Calu3 (cell line): ENCODE measurements at regions of chr6 and their contacts with region 1.

Region 1: GRCh38 chr6:25263657-25264056 is 15.5 kb upstream of the CARMIL1 start:
- DNase-seq: no peak
- H3K4me3 Mint-ChIP-seq: no peak overlapping the region
- H3K27ac Mint-ChIP-seq: no peak overlapping the region
- H3K4me1 Mint-ChIP-seq: peaks cover 10% of the 10 kb centered on the region
- H3K27me3 Mint-ChIP-seq: no peaks in the 10 kb centered on the region
- CTCF ChIP-seq: no peak

Region 2: DNA sequence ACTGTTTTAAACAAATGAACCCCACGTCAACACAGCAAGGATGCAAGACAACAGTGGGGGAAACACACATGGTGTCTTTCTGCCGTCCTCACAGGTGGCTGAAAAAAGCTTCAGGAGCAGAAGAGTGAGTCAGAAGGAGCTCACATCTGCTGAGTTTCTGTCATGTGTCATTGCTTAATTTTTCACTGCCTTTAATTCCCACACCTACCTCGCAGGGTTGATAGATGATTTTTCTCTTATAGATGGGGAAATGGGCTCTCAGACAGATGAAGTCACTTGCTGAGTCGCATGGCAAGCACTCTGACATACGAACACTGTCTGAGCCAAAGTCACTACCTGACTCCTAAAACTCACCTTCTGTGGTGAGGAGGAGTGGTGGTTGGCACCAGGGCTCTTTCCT is 12.8 kb before region 1 on chr6:
- CTCF ChIA-PET with region 1: interaction called, 21 read pairs
- intact Hi-C with region 1: no loop called
- DNase-seq: no peak
- H3K4me3 Mint-ChIP-seq: no peak overlapping the region
- H3K27ac Mint-ChIP-seq: no peak overlapping the region
- H3K4me1 Mint-ChIP-seq: no peaks in the 10 kb centered on the region
- H3K27me3 Mint-ChIP-seq: no peaks in the 10 kb centered on the region
- CTCF ChIP-seq: no peak

Region 3: GRCh38 chr6:25490018-25490801 is 226.6 kb after region 1 on chr6:
- CTCF ChIA-PET with region 1: interaction called, 84 read pairs
- intact Hi-C with region 1: loop called (anchors 1 kb)
- DNase-seq: peak; percentile 86
- H3K4me3 Mint-ChIP-seq: no peak overlapping the region
- H3K27ac Mint-ChIP-seq: peak overlapping the region; percentile 2
- H3K4me1 Mint-ChIP-seq: peaks cover 13% of the 10 kb centered on the region
- H3K27me3 Mint-ChIP-seq: no peaks in the 10 kb centered on the region
- CTCF ChIP-seq: peak; percentile 81

Region 4: DNA sequence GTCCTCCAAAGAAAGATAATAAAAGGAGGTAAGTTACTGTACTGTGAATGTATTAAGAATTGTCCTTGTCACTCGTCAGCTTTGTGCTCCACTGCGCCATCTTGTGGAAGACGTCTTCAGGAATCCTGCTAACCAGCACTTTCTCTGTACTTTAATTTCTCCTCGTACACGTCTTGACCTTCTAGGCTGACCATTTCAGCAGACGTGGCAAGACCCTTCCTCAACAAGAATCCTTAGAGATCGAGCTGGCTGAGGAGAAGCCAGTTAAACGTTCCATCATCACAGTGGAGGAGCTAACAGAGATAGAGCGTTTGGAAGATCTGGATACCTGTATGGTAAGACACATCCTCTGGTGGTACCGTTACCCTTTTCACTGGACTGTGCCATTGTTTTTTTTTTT is 292.9 kb after region 1 on chr6:
- CTCF ChIA-PET with region 1: interaction called, 18 read pairs
- intact Hi-C with region 1: loop called (anchors 1 kb)
- DNase-seq: peak; percentile 88
- H3K4me3 Mint-ChIP-seq: no peak overlapping the region
- H3K27ac Mint-ChIP-seq: peak overlapping the region; percentile 2
- H3K4me1 Mint-ChIP-seq: peaks cover 16% of the 10 kb centered on the region
- H3K27me3 Mint-ChIP-seq: no peaks in the 10 kb centered on the region
- CTCF ChIP-seq: peak; percentile 94

Region 5: GRCh38 chr6:25601800-25602673 is 338.4 kb after region 1 on chr6:
- CTCF ChIA-PET with region 1: interaction called, 3 read pairs
- intact Hi-C with region 1: loop called (anchors 1 kb)
- DNase-seq: no peak
- H3K4me3 Mint-ChIP-seq: no peak overlapping the region
- H3K27ac Mint-ChIP-seq: peak overlapping the region; percentile 13
- H3K4me1 Mint-ChIP-seq: peaks cover 17% of the 10 kb centered on the region
- H3K27me3 Mint-ChIP-seq: no peaks in the 10 kb centered on the region
- CTCF ChIP-seq: peak; percentile 47

Region 6: DNA sequence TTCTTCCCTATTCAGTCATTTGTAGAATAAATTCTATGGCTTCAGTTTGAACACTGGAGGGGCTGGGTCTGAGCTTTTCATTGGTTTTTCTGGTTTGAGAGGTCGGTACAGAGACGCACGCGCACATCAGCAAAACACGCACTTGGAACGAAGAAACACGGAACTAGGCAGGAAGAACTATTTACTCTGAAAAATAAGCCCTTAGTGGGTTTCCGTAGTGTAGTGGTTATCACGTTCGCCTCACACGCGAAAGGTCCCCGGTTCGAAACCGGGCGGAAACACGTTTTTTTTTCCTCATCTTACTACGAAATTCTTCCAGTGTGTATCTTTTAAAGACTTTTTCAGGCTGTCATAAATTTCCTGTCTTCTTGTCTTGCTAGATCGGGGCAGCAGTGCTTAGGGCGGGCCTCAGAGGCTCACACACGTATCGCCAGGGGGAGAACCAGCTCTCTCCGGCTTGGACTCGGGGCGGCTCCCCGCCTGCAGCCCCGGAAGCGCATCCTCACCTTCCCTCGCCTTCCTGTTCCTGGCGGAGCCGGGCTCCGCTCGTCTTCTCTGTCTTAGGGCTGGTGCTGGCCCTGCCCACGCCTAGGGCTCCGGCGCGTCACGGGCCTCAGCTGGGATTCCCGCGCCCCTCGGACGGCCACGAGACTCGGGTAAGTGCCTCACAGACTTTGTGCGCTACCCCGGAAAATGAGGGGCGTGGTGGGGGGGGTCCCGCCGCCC is 1274.4 kb after region 1 on chr6 and contains the start of gene HMGN4:
- CTCF ChIA-PET with region 1: no interaction called
- intact Hi-C with region 1: no loop called
- DNase-seq: peak; percentile 85
- H3K4me3 Mint-ChIP-seq: peak within 1 kb of the TSS; percentile 94
- H3K27ac Mint-ChIP-seq: peak within 1 kb of the TSS; percentile 95
- H3K4me1 Mint-ChIP-seq: peaks cover 34% of the 10 kb centered on the region
- H3K27me3 Mint-ChIP-seq: no peaks in the 10 kb centered on the region
- CTCF ChIP-seq: no peak
- total RNA-seq, gene HMGN4: 49.7 and 60.0 TPM in 2 replicates